IMR-90 (cell line): ENCODE measurements at regions of chr3 and their contacts with region 1.

Region 1: DNA sequence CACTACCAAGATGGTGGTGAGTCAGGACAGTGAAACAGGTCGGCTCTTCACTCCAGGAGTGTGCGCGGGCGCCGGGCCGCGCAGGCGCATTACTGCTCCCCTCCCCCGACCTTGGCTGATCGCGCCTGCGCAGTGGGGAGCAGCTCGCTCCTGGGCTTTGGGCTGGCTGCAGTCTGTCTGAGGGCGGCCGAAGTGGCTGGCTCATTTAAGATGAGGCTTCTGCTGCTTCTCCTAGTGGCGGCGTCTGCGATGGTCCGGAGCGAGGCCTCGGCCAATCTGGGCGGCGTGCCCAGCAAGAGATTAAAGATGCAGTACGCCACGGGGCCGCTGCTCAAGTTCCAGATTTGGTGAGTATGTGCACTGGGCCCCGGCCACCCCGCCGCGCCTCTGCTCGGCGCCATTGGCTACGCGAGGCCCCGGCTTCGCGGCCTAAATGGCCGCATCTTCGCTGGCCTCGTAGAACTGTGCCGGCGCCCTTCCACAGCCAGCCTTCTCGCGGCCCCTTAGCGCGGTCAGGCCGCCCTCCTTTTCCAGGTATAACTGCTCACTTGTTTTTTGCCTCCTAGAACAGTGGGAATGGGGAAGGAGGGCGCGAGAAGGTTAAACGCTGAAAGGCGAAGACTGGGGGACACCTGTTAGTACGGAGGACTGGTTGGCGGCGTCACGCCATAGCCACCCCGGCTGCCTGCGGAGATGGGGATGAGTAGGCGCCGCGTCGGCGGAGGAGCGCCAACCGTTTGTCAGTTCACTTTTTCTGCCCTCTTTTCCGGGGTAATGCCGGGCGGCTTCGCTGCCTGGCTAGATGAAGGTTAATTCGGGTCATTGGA is at the start of gene SELENOT:
- DNase-seq: peak; percentile 96
- ATAC-seq: peak; percentile 87
- H3K4me3 ChIP-seq: peak within 1 kb of the TSS; percentile 56
- H3K27ac ChIP-seq: peak within 1 kb of the TSS; percentile 87
- H3K4me1 ChIP-seq: no peaks in the 10 kb centered on the region; the same call in 1 of the 2 replicates
- H3K27me3 ChIP-seq: no peaks in the 10 kb centered on the region
- CTCF ChIP-seq: peak; percentile 33; the same call in 1 of the 2 replicates
- POLR2A ChIP-seq: peak; percentile 97
- RAD21 ChIP-seq: 0 out of 2 replicates have a peak, but pooled peaks have one; percentile 24
- total RNA-seq, gene SELENOT: 399 and 415 TPM in 2 replicates

Region 2: DNA sequence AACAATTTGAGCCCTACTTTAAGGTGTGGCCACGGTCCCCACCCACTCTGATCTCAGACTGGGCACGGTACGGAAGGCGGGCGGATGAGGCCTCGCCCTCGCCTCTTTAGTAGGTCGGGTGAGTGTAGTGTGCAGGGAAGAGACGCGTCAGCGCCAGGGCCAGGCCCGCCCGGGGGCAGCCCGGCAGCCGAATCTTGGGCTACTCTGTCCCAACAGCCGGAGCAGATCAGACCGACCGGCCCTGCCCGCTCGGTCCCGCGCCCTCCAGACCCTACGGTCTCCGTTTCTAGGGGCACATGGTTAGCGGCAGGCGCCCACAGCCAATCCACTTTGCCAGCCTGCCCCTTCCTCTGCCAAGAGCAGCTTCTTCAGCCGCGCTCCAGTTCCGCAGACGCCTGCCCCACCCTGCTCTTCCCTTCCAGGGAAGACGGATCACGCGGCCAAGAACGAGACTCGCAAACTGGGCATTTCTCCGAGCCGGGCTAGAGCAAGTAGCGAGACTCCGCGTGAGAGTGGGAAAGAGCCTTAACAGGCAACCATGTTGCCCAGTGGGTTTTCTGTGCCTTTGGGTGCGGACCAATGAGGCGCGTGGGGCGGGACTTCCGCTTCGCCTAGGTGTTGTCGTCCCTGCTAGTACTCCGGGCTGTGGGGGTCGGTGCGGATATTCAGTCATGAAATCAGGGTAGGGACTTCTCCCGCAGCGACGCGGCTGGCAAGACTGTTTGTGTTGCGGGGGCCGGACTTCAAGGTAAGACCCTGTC is 790.6 kb before region 1 on chr3 and contains the start of gene RNF13:
- CTCF ChIA-PET with region 1: no interaction called
- POLR2A ChIA-PET with region 1: no interaction called
- dilution Hi-C with region 1: no loop called
- in situ Hi-C with region 1: no loop called
- intact Hi-C with region 1: no loop called
- DNase-seq: peak; percentile 94
- ATAC-seq: peak; percentile 95
- H3K4me3 ChIP-seq: peak within 1 kb of the TSS; percentile 69
- H3K27ac ChIP-seq: peak within 1 kb of the TSS; percentile 74
- H3K4me1 ChIP-seq: no peaks in the 10 kb centered on the region
- H3K27me3 ChIP-seq: no peaks in the 10 kb centered on the region
- CTCF ChIP-seq: no peak
- POLR2A ChIP-seq: peak; percentile 82
- RAD21 ChIP-seq: no peak
- total RNA-seq, gene RNF13: 29.8 and 39.2 TPM in 2 replicates

Region 3: GRCh38 chr3:150589759-150590158 is 13.6 kb before region 1 on chr3:
- CTCF ChIA-PET with region 1: interaction called, 13 read pairs
- POLR2A ChIA-PET with region 1: no interaction called
- dilution Hi-C with region 1: no loop called
- in situ Hi-C with region 1: no loop called
- intact Hi-C with region 1: no loop called
- DNase-seq: peak; percentile 32
- ATAC-seq: peak; percentile 50
- H3K4me3 ChIP-seq: no peak overlapping the region
- H3K27ac ChIP-seq: no peak overlapping the region
- H3K4me1 ChIP-seq: 0 out of 2 replicates have a peak, but pooled peaks cover 2% of the 10 kb centered on the region
- H3K27me3 ChIP-seq: no peaks in the 10 kb centered on the region
- CTCF ChIP-seq: no peak
- POLR2A ChIP-seq: no peak
- RAD21 ChIP-seq: no peak

Region 4: GRCh38 chr3:150703299-150704134 is 100.2 kb after region 1 on chr3 and contains the start of gene ERICH6:
- CTCF ChIA-PET with region 1: no interaction called
- POLR2A ChIA-PET with region 1: no interaction called
- dilution Hi-C with region 1: no loop called
- in situ Hi-C with region 1: no loop called
- intact Hi-C with region 1: loop called (anchors 5 kb)
- DNase-seq: peak; percentile 85
- ATAC-seq: peak; percentile 99
- H3K4me3 ChIP-seq: peak within 1 kb of the TSS; percentile 91
- H3K27ac ChIP-seq: peak within 1 kb of the TSS; percentile 57
- H3K4me1 ChIP-seq: peaks cover 2% of the 10 kb centered on the region; the same call in 1 of the 2 replicates
- H3K27me3 ChIP-seq: no peaks in the 10 kb centered on the region
- CTCF ChIP-seq: 0 out of 2 replicates have a peak, but pooled peaks have one; percentile 3
- POLR2A ChIP-seq: peak; percentile 65
- RAD21 ChIP-seq: no peak
- total RNA-seq, gene ERICH6: under 0.01 TPM in 1 of 2 replicates, not detected in the other

Region 5: DNA sequence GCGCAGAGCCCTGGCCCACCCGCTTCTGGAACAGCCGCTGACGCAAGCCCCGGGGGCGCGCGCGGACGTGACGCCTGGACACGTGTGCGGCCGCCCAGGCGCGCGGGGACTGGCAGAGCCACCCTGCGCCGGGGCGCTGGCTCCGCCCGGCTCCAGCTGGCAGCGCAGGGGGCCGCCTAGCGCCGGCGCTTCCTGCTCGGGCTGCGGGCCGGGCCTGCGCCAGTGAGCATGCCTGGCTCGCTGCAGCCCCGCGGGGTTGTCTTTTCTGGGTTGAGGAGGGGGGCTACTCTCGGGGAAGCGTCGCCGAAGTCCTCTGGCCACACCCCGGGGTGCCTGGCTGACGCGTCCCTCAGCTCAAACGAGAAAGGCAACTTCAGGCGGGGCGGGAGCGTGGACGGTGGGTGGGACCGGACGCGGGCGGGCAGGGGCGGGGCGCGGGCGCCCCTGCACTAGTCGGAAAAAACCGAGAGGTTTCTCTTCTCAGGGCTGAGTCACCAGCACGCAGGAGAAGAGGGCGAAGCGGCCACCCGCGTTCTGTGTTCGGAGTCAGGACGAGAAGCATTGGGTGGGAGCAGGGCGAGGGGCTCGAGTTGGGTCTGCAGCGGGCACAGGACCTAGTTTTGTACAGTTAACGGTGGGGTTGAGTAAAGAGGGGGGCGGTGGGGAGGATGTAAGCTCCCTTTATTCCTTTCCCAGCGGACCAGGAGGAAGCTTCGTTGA is 159.9 kb after region 1 on chr3 and contains the start of gene SIAH2:
- CTCF ChIA-PET with region 1: interaction called, 4 read pairs
- POLR2A ChIA-PET with region 1: no interaction called
- dilution Hi-C with region 1: no loop called
- in situ Hi-C with region 1: no loop called
- intact Hi-C with region 1: loop called (anchors 5 kb)
- DNase-seq: peak; percentile 93
- ATAC-seq: peak; percentile 87
- H3K4me3 ChIP-seq: peak within 1 kb of the TSS; percentile 98
- H3K27ac ChIP-seq: peak within 1 kb of the TSS; percentile 94
- H3K4me1 ChIP-seq: peaks cover 9% of the 10 kb centered on the region; the same call in 1 of the 2 replicates
- H3K27me3 ChIP-seq: no peaks in the 10 kb centered on the region
- CTCF ChIP-seq: peak; percentile 11; the same call in 1 of the 2 replicates
- POLR2A ChIP-seq: peak; percentile 87
- RAD21 ChIP-seq: no peak
- total RNA-seq, gene SIAH2: 24.7 and 26.1 TPM in 2 replicates